Heart right ventricle (tissue), 16 donors: ENCODE measurements at regions of chr6 and their contacts with region 1.

Region 1: GRCh38 chr6:137799950-137800568 is 67.0 kb upstream of the TNFAIP3 start:
- DNase-seq: peak in 1 of 2 donors; percentile 60
- ATAC-seq: peak in 6 of 8 donors; percentile 41 to 66 (median 58)
- H3K4me3 ChIP-seq: no peak overlapping the region
- H3K27ac ChIP-seq: no peak overlapping the region
- H3K4me1 ChIP-seq: peaks cover 0 to 8% (median 0%) of the 10 kb centered on the region in 9 donors
- H3K27me3 ChIP-seq: no peaks in the 10 kb centered on the region
- CTCF ChIP-seq: peak in 7 of 9 donors; percentile 46 to 69 (median 57)

Region 2: GRCh38 chr6:137754366-137754765 is 45.7 kb before region 1 on chr6:
- intact Hi-C with region 1: no loop called
- DNase-seq: no peak
- ATAC-seq: no peak
- H3K4me3 ChIP-seq: no peak overlapping the region
- H3K27ac ChIP-seq: peak overlapping the region in 1 of 10 donors; percentile 23
- H3K4me1 ChIP-seq: peaks cover 0 to 28% (median 0%) of the 10 kb centered on the region in 9 donors
- H3K27me3 ChIP-seq: no peaks in the 10 kb centered on the region
- CTCF ChIP-seq: no peak

Region 3: GRCh38 chr6:137866914-137867684 is 67.0 kb after region 1 on chr6 and contains the start of gene TNFAIP3:
- intact Hi-C with region 1: loop called in 4 of 10 experiments (anchors 5 kb)
- DNase-seq: peak; percentile 92 to 93
- ATAC-seq: peak; percentile 93 to 97 (median 94)
- H3K4me3 ChIP-seq: peak within 1 kb of the TSS; percentile 75 to 99 (median 85)
- H3K27ac ChIP-seq: peak within 1 kb of the TSS; percentile 57 to 96 (median 88)
- H3K4me1 ChIP-seq: peaks cover 3 to 58% (median 39%) of the 10 kb centered on the region in 9 donors
- H3K27me3 ChIP-seq: no peaks in the 10 kb centered on the region
- CTCF ChIP-seq: peak; percentile 68 to 99 (median 82)
- total RNA-seq, gene TNFAIP3: 3.2 to 33.3 (median 9.6) TPM